Activated CD4-positive, alpha-beta T cell treated with anti-CD3 and anti-CD28 coated beads, Interleukin-2, amount 10 ng/mL, durations not matched to agents 24 days and 14 days (primary cell): ENCODE measurements at regions of chr18 and their contacts with region 1.

Region 1: GRCh38 chr18:32730620-32731091 is 42.2 kb downstream of the KLHL14 start:
- DNase-seq: no peak
- H3K4me3 Mint-ChIP-seq: peak overlapping the region; percentile 29
- H3K27ac Mint-ChIP-seq: no peak overlapping the region
- H3K4me1 Mint-ChIP-seq: no peaks in the 10 kb centered on the region
- H3K27me3 Mint-ChIP-seq: peaks cover 4% of the 10 kb centered on the region

Region 2: GRCh38 chr18:32771169-32771751 is 40.6 kb after region 1 on chr18:
- intact Hi-C with region 1: no loop called
- DNase-seq: no peak
- H3K4me3 Mint-ChIP-seq: no peak overlapping the region
- H3K27ac Mint-ChIP-seq: no peak overlapping the region
- H3K4me1 Mint-ChIP-seq: peaks cover 2% of the 10 kb centered on the region
- H3K27me3 Mint-ChIP-seq: peaks cover 48% of the 10 kb centered on the region

Region 3: GRCh38 chr18:32884543-32884942 is 153.9 kb after region 1 on chr18:
- intact Hi-C with region 1: loop called (anchors 5 kb)
- DNase-seq: no peak
- H3K4me3 Mint-ChIP-seq: no peak overlapping the region
- H3K27ac Mint-ChIP-seq: no peak overlapping the region
- H3K4me1 Mint-ChIP-seq: no peaks in the 10 kb centered on the region
- H3K27me3 Mint-ChIP-seq: no peaks in the 10 kb centered on the region